Activated CD4-positive, alpha-beta T cell treated with anti-CD3 and anti-CD28 coated beads, Interleukin-2, amount 10 ng/mL, durations not matched to agents 24 days and 14 days (primary cell): ENCODE measurements at regions of chr19 and their contacts with region 1.

Region 1: GRCh38 chr19:12681074-12681951 is at the start of gene DHPS:
- DNase-seq: peak; percentile 97
- H3K4me3 Mint-ChIP-seq: peak within 1 kb of the TSS; percentile 94
- H3K27ac Mint-ChIP-seq: peak within 1 kb of the TSS; percentile 92
- H3K4me1 Mint-ChIP-seq: peaks cover 20% of the 10 kb centered on the region
- H3K27me3 Mint-ChIP-seq: no peaks in the 10 kb centered on the region
- total RNA-seq, gene DHPS: 138 and 155 TPM in 2 replicates

Region 2: DNA sequence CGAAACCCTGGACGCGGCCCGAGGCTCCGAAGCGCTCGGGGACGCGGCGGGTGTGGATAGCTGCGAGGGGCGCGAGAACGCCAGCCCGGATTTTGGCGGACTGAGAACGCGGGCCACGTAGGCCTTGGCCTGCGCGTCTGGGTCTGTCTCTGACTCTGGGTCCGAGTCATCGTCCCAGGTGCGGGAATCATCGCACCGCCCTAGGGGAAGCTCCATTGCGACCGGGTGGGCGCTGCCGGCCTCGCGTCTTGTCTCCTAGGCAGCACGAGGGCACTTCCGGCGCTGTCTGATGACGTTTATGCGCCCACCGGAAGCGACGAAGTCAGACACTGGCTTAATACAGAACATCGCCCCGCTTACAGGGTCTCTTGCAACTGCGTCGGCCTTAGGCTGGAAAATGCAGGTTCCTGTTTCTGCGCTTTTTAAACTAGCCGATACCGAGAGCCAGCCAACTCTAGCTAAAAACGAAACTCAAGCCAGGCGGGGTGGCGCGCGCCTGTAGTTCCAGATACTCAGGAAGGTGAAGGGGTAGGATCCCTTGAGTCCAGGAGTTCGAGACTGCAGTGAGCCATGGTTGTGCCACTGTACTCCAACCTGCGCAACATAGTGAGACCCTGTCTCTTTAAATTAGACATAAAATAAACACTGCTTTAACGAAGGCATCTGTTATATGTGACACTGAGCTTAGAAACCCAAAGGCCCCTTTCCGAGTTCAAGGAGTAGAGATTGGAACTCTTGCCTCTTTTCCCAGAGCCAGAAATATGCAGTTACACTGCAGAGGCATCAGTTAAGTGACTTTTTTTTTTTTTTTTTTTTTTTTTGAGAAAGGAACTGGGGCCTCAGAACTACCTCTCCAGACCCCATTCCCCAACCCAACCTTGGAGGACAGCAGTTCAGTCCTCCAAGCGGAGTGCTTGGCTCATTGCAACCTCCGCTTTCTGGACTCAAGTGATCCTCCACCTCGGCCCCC is 15.3 kb after region 1 on chr19 and contains the start of gene FBXW9:
- intact Hi-C with region 1: loop called (anchors 2 kb)
- DNase-seq: peak; percentile 99
- H3K4me3 Mint-ChIP-seq: peak within 1 kb of the TSS; percentile 90
- H3K27ac Mint-ChIP-seq: peak within 1 kb of the TSS; percentile 94
- H3K4me1 Mint-ChIP-seq: peaks cover 8% of the 10 kb centered on the region
- H3K27me3 Mint-ChIP-seq: no peaks in the 10 kb centered on the region
- total RNA-seq, gene FBXW9: 12.4 and 12.9 TPM in 2 replicates